Body of pancreas (tissue), 4 donors: ENCODE measurements at regions of chr14 and their contacts with region 1.

Region 1: DNA sequence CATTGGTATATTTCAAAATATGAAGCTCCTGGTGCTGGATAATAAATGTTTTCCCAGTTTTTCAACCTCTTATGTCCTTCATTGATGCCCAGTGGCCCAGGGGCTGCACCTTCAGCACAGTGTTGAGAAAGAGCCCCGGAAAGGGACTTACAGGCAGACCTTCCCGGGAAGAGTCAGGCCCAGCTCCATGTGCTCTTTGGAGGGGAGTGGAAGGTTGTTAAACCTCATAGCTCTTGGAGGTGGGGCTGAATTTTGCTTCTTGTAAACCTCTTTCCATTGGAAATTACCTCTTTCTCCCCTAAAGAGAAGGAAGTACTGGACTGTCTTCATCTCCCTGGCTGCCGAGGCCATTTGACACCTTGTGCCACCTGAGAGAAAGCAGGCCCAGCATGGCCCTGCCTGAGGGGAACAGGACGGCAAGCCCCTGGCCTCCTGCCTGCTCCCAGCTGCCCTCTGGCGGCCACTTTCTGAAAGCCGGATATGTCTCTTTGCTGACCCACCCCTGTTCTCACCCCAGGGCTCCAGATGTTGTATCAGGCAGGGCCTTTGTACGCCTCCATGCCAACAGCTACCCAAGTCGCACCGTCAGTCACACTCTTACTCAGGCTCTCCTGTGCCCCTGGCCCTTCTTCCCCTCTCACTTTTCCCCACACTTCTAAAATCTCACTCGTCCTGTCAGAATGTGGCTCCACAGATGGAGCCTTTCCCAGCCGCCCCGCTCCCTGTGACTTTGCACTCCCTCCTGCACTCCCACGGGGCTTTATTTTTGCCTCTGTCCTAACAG is 43.0 kb downstream of the EVL start:
- DNase-seq: peak; percentile 82 to 89 (median 86)
- ATAC-seq: peak; percentile 91
- H3K4me3 ChIP-seq: no peak overlapping the region
- H3K27ac ChIP-seq: peak overlapping the region in 1 of 4 donors; percentile 6
- H3K4me1 ChIP-seq: peaks cover 19% of the 10 kb centered on the region
- H3K27me3 ChIP-seq: no peaks in the 10 kb centered on the region
- CTCF ChIP-seq: peak; percentile 74 to 89 (median 84)
- POLR2A ChIP-seq: no peak

Region 2: GRCh38 chr14:99982537-99983250 is 125.5 kb before region 1 on chr14:
- intact Hi-C with region 1: loop called (anchors 10 kb)
- DNase-seq: peak; percentile 37 to 55 (median 45)
- ATAC-seq: peak; percentile 81
- H3K4me3 ChIP-seq: no peak overlapping the region
- H3K27ac ChIP-seq: no peak overlapping the region
- H3K4me1 ChIP-seq: peaks cover 32% of the 10 kb centered on the region
- H3K27me3 ChIP-seq: no peaks in the 10 kb centered on the region
- CTCF ChIP-seq: peak; percentile 56 to 89 (median 82)
- POLR2A ChIP-seq: no peak